ENCODE measurements at regions of chr7 and their contacts with region 1.

Region 1: DNA sequence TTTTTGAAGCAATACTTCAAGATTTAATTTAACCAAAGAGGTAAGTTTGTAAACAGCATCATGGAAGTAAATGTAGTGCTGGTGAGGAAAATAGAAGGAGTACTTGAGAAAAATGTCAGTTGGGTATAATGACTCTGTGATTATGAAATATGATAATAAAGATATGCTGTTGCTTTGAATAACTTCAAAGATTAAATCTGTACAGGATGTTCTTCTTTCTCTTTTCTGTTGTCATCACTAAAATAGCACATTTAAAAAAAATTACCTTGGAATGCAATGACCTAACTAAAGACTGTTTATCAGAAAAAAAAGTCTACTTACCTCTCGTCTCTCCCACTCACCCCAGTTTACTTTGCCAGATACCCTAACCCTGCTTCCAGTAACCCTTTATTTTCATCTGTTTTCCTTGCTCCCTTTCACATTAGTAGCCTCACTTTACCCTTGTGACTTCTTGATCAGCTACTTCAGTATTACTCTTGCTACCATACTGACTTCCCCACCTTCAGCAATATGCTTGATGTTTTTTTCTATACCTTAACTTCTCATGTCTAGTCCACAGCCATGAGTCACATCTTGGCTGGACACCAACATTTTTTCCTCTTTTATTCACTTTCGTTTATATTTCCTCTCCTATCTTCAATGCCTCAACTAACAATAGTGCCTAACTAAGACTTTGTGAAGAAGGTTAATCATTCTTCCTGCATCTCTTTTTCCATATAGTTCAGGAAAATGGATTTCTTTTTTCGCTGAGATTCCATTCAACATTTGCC is 29.7 kb upstream of the TAS2R16 start:
- DNase-seq: no peak
- ATAC-seq: no peak

Region 2: GRCh38 chr7:122951006-122951405 is 74.2 kb before region 1 on chr7:
- intact Hi-C with region 1: no loop called
- DNase-seq: no peak
- ATAC-seq: no peak

Region 3: DNA sequence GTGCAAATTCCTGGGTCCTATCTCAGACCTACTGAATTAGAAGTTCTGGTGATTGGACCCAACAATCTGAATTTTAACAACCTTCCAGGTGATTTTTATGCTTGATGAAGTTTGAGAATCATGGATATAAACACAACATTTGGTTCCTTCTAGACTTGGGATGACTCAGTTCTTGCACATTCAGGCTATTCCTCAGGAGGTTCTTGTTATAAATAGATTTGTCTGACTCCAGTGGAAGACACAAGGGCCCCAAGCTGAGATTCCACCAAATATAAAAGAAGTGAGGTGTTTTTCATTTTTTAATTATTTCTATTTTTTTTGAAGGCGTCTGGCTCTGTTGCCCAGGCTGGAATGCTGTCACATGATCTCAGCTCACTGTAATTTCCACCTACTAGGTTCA is 20.2 kb before region 1 on chr7:
- intact Hi-C with region 1: loop called (anchors 1 kb)
- DNase-seq: no peak
- ATAC-seq: no peak

Region 4: DNA sequence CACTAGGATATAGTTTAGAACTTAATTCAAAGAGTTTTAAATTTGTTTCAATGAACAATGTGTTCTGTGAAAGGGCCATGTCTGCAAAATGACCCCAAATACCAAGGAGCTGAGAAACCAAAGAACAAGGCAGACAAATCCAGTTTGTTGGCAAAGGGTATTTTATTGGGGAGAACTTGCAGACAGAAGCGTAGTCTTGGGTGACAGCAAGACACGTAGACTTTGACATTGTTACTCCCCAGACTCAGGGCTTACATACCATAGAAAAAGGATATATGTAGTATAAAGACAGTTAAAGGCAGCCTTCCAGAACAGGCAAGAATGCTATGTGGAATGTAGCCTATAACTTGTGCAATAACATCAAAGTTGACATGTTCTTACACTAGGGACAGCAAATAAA is 65.3 kb after region 1 on chr7:
- intact Hi-C with region 1: no loop called
- DNase-seq: no peak
- ATAC-seq: no peak

Measured in sciatic nerve (tissue), 2 donors.